ENCODE measurements at regions of chr11 and their contacts with region 1.

Region 1: DNA sequence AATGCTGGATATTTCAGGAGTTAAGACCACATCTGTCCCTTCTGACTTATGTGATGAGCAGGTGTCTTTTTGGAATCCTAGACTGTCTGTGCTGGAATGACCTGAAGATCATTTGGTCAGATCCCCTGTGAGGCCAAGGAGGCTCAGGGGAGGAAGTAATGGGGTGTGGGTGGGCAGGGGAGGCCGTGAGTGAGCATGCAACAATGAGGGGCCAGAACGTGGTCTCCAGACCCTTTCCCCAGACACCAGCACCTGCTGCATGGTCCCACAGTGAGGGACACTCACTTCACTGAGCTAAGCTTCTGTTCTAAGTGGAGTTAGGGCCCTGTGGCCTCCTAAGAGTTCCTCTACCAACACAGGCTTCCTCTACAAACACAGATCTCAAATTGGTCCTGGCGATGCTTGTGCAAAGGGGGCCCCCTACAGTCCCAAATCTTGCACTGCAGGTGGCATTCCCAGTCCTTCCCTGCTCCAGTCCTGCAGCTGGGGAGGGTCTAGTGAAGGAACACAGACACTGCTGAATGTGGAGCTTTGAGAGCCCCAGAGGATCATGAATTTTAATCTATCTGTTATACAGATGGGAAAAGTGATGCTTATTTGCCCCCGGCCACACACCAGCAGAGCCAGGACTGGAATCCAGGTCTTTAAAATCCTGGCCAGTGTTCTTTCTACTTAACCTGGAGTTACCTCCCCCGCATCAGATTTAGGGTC is 7.4 kb downstream of the USP2 start:
- DNase-seq: peak; percentile 55
- ATAC-seq: peak; percentile 83
- H3K4me3 ChIP-seq: no peak overlapping the region
- H3K27ac ChIP-seq: no peak overlapping the region
- H3K4me1 ChIP-seq: peaks cover 13% of the 10 kb centered on the region
- H3K27me3 ChIP-seq: no peaks in the 10 kb centered on the region
- CTCF ChIP-seq: peak; percentile 98

Region 2: DNA sequence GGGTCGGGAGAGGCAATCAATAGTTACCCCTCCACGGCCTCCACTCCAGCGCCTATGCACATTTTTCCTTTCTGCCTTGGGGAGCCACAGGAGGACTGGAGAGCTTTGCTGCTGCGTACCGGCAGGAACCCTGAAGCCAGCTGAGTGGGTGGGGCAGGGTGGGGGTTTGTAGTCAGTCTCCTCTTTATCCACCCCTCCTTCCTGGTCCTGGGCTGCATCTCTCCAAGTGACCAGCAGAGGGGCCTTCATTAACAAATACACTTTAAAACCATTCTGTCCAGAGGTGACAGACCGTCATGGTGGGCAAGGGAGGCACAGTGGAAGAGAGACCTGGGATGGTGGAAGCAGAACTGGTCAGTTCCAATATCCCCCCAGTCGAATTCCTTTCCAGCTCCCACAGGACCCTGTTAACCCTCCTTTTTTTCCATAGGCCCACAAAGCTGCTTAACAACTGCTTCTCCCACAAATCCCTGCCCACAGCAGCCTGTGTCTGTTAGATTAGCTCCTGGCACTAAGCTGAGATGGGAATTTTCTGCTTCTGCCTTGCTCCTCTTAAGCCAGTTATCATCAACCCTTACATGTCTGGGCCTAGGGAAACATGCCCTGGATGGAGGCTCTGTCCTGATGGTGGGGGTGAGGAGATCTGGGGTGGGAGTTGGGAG is 229.1 kb before region 1 on chr11:
- CTCF ChIA-PET with region 1: no interaction called
- POLR2A ChIA-PET with region 1: no interaction called
- in situ Hi-C with region 1: no loop called
- intact Hi-C with region 1: no loop called
- DNase-seq: peak; percentile 52
- ATAC-seq: peak; percentile 91
- H3K4me3 ChIP-seq: peak overlapping the region in 1 of 2 experiments; percentile 15; a peak in 1 of 4 replicates
- H3K27ac ChIP-seq: no peak overlapping the region
- H3K4me1 ChIP-seq: peaks cover 5% of the 10 kb centered on the region; the same call in 1 of the 2 replicates
- H3K27me3 ChIP-seq: no peaks in the 10 kb centered on the region
- CTCF ChIP-seq: peak; percentile 88

Region 3: GRCh38 chr11:119306373-119306890 is 67.6 kb before region 1 on chr11:
- CTCF ChIA-PET with region 1: no interaction called
- POLR2A ChIA-PET with region 1: no interaction called
- in situ Hi-C with region 1: no loop called
- intact Hi-C with region 1: no loop called
- DNase-seq: no peak
- ATAC-seq: no peak
- H3K4me3 ChIP-seq: no peak overlapping the region
- H3K27ac ChIP-seq: no peak overlapping the region
- H3K4me1 ChIP-seq: no peaks in the 10 kb centered on the region
- H3K27me3 ChIP-seq: no peaks in the 10 kb centered on the region
- CTCF ChIP-seq: no peak

Region 4: DNA sequence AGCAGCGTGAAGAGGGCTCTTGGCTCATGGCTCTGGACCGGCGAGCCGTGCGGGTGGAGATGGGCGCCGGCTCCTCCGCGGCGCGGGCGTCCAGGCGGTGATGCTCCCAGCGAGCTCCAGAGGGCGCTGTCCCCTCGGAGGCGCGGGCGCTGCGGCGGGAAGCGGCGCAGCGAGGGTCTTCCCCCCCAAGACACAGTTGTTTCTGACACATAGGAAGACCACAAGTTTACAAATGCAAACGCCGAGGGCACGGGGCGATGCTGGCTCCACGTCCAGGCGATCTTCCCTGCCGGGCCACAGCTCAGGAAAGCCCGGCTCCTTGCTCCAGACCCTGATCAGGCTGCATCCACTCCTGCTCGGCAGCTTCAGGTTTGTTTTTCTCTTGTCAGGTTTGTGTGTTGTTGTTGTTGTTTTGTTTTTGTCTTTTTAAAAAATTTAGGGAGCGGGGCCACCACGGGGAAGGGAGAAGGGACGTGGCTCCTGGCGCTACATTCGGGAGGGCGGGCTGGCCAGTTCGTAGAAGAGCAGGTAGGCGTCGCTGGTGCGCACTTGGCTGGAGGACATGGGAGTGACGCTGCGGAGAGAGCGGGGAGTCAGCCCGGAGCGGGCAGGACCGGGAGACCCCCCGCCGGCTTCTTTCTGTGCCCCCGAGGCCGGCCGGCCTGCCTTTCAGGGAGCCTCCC is 17.6 kb before region 1 on chr11:
- CTCF ChIA-PET with region 1: interaction called, 10 read pairs
- POLR2A ChIA-PET with region 1: no interaction called
- in situ Hi-C with region 1: no loop called
- intact Hi-C with region 1: no loop called
- DNase-seq: no peak
- ATAC-seq: no peak
- H3K4me3 ChIP-seq: no peak overlapping the region; a peak in 1 of 4 replicates
- H3K27ac ChIP-seq: no peak overlapping the region
- H3K4me1 ChIP-seq: peaks cover 12% of the 10 kb centered on the region
- H3K27me3 ChIP-seq: no peaks in the 10 kb centered on the region
- CTCF ChIP-seq: peak; percentile 84; the same call in 1 of the 2 replicates

Region 5: DNA sequence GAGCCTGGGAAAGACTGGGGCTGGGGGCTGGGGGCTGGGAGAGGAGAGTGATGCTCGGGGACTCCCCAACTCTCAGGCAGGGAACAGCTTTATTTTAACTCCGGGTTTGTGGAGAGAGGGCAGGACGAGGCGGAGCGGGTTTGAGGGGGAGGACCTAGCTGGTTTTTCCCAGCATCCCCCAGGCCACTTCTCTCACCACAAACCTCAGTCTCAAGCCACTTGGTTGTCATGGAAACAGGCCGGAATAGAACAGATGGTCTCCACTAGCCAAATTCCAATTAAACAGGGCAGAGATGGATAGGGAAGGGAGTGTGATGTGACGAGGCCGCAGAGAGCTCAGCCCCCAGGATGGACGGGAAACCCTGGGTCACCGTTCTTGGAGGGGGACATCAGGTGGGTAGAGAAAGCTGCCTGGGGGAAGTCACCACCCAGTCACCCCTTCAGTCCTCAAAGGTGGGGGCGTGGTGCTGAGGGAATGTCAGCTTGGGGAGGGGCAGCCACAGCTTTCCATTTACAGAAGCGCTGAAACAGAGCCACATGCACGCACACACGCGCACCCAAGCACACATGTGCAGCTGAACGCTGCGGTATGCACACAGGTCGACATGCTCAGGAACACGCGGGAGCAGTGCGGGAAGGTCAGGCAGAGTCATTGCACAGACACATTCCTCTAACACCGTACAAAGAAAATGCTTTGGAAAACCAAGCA is 335.7 kb after region 1 on chr11:
- CTCF ChIA-PET with region 1: no interaction called
- POLR2A ChIA-PET with region 1: no interaction called
- in situ Hi-C with region 1: no loop called
- intact Hi-C with region 1: no loop called
- DNase-seq: no peak
- ATAC-seq: no peak
- H3K4me3 ChIP-seq: no peak overlapping the region
- H3K27ac ChIP-seq: no peak overlapping the region
- H3K4me1 ChIP-seq: no peaks in the 10 kb centered on the region
- H3K27me3 ChIP-seq: no peaks in the 10 kb centered on the region
- CTCF ChIP-seq: no peak

Measured in Panc1 (cell line).